Caki2 (cell line): ENCODE measurements at regions of chr11 and their contacts with region 1.

Region 1: DNA sequence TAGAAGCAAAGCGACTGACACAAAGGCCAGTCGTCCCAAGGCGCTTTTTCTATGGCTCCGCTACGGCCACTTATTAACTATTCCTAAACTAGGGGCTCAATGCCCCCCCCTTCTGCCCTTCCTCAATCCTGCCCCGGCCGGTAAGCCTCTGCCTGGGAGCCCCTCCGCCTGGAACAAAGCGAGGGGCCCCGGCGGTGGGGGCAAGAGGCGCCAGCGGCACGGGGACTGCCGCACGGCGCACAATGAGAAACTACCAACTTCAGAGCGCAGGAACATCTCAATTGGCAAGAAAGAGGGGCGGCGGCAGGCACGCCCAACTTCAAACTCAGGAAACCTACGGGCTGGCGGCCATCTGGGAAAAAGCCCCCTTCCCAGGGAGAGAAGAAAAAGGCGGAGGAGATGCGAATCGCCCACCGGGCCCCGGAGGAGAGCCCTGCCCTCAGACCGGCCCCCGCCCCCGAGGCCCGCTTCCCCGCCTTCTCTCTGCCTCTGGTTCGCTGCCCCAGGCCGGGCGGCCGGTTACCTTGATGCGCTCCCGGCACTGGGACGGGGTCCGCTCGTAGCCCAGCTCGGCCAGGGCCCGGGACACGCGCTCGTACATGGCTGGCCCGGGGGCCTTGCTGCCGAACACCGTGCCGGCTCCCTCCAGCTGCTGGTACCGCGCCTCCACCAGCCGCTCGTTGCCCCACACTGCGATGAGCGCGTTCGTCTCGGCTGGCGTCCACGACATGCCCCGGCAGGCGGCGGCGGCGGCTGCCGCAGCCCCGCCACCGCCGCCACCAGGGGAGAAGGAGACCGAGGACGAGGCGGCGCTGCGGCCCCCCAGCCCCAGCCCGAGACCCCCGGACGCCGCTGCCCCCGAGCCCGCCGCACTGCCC is 619 bp downstream of the MSANTD2 start:
- DNase-seq: peak; percentile 48

Region 2: DNA sequence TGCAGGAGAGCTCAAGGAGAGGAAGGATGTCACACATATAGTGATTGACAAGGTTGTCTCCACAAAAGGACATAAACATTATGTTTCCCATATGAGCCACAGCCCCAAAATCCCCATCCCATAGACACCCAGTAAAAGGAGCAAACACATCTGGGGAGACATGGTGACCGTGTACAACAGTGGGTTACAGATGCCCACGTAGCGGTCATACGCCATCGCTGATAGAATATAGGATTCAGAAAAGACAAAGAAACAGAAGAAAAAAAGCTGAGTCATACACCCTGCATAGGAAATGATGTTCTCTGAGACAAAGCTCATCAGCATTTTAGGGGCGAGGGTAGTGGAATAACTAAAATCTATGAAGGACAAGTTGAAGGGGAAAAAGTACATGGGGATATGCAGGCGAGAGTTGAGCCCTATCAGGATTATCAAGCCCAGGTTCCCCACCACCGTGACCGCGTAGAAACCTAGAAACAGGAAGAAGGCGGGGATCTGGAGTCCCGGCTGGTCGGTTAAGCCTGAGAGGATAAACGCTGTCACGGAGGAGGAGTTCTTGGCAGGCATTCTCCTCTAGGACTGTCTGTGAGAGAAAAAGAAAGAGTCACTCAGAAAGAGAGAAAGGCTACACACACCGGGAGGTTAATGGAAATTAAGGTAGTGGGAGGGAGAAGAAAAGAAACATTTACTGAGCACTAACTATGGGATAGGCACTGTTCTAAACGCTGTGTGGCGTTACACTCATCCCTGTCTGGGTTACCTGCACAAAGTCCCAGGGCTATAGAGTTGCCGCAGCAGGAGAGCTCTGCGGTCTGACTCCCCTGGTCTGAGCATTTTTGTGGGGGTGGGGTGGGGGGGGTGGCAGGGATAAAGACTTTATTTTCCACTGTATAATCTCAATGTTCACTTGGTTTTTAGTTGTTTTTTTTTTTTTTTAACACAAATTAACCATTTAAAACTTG is 317.9 kb before region 1 on chr11:
- in situ Hi-C with region 1: no loop called
- DNase-seq: peak; percentile 77

Region 3: GRCh38 chr11:124739479-124740276 is 59.9 kb before region 1 on chr11 and contains the start of gene NRGN:
- in situ Hi-C with region 1: no loop called
- DNase-seq: peak; percentile 74
- total RNA-seq, gene NRGN: 1.4 TPM in 1 of 2 replicates, not detected in the other

Region 4: GRCh38 chr11:124753205-124753604 is 46.4 kb before region 1 on chr11:
- in situ Hi-C with region 1: no loop called
- DNase-seq: no peak

Region 5: GRCh38 chr11:124829986-124830385 is 30.4 kb after region 1 on chr11:
- in situ Hi-C with region 1: loop called (anchors 5 kb)
- DNase-seq: no peak

Region 6: DNA sequence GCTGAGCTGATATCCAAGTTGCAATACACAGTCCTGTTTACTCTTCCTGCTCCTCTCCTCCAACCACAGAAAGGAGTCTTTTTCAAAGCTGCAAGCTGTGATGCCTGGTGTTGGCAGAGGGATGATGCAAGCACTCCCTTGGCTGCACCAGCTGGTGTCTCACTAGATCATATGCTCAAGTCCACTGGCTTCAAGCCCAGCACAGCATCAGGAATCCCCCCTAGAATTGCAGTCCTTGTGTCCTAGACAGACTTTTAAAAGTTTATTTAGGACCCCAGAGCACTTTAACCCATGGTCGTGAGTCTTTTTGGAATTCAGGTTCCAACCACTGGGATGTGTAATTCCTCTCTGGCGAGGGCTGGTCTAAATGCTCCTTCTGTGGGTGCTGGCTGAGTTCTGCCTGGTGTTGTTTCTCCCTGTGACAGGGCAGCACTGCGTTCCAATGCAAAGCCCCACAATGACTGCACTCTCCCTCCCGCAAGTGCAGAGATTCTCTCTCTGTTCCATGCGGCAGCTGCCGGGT is 117.6 kb after region 1 on chr11:
- in situ Hi-C with region 1: no loop called
- DNase-seq: no peak